WTC11 (cell line): ENCODE measurements at regions of chr19 and their contacts with region 1.

Region 1: DNA sequence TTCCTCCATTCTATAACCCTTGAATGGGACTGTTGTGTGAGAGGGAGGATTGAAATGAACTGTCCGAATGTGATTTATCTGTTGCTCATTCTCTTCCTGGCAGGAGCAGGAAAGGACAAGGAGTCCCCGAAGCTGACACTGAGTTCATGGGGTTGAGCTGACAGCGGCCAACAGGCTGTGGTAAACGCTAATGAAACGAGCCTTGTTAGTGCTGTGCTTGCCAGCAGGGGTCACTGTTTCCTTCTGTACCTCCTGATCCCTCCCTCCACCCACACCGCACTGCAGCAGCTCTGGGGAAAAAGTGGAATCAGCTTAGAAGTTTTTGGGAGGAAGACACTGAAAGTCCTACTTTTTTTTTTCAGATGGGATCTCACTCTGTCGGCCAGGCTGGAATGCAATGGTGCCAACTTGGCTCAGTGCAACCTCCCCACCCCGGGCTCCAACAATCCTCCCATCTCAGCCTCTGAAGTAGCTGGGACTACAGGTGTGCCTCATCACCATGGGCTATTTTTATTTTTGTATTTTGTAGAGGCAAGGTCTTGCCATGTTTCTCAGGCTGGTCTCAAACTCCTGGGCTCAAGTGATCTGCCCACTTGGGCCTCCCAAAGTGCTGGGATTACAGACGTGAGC is 6.7 kb upstream of the ZNF761 start:
- DNase-seq: peak; percentile 85
- ATAC-seq: peak; percentile 82
- H3K4me3 Mint-ChIP-seq: no peak overlapping the region
- H3K27ac Mint-ChIP-seq: peak overlapping the region; percentile 72
- H3K4me1 Mint-ChIP-seq: peaks cover 23% of the 10 kb centered on the region
- H3K27me3 Mint-ChIP-seq: no peaks in the 10 kb centered on the region
- CTCF ChIP-seq: peak; percentile 81

Region 2: GRCh38 chr19:53389978-53390377 is 35.1 kb before region 1 on chr19:
- CTCF ChIA-PET with region 1: interaction called, 25 read pairs
- POLR2A ChIA-PET with region 1: no interaction called
- DNase-seq: peak; percentile 96
- ATAC-seq: peak; percentile 84
- H3K4me3 Mint-ChIP-seq: peak overlapping the region; percentile 61
- H3K27ac Mint-ChIP-seq: peak overlapping the region; percentile 64
- H3K4me1 Mint-ChIP-seq: peaks cover 29% of the 10 kb centered on the region
- H3K27me3 Mint-ChIP-seq: no peaks in the 10 kb centered on the region
- CTCF ChIP-seq: no peak

Region 3: DNA sequence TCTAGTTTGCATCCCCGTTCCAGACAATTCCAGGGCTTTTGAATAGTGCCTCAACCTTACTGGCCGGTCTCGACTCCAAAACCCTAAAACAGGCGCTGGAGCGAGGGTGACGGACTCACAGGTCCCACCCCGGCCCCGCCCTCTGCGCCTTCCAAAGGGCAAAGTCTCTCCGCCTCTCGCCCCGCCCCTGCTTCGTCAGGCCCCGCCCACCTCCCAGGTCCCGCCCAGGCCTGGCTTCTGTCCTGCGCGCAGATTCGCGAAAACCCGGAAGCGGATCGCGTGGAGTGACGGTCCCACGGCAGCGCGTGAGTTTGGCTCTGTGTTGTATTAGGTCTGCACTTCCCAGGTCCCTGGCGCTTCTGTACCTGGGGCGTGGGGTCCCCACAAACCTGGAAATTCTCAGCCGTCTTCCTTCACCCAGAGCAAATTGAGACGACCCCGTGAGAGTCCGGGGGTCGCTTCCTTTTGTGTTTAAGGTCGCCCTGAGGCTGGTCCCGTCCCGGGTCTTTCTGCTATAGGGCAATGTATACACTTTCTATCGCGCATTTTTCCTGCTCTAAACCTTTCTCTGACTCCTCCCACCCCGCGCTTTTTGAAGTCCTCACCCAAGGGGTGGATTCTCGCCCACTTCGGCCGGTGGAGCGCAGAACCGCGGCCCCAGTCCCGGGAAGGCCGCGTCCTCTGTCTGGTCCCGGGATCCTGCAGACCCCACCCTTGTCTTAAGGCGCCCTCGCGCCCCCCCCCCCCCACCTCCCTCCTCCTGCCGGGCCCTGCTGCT is 42.6 kb after region 1 on chr19 and contains the start of gene ZNF813:
- CTCF ChIA-PET with region 1: interaction called, 44 read pairs
- POLR2A ChIA-PET with region 1: no interaction called
- DNase-seq: peak; percentile 99
- ATAC-seq: peak; percentile 79
- H3K4me3 Mint-ChIP-seq: peak within 1 kb of the TSS; percentile 93
- H3K27ac Mint-ChIP-seq: peak within 1 kb of the TSS; percentile 90
- H3K4me1 Mint-ChIP-seq: peaks cover 48% of the 10 kb centered on the region
- H3K27me3 Mint-ChIP-seq: peaks cover 8% of the 10 kb centered on the region
- CTCF ChIP-seq: no peak
- total RNA-seq, gene ZNF813: 15.2 to 17.6 TPM (median 17.5 TPM) in 3 replicates

Region 4: GRCh38 chr19:53492153-53492552 is 67.1 kb after region 1 on chr19:
- CTCF ChIA-PET with region 1: no interaction called
- POLR2A ChIA-PET with region 1: no interaction called
- DNase-seq: no peak
- ATAC-seq: no peak
- H3K4me3 Mint-ChIP-seq: no peak overlapping the region
- H3K27ac Mint-ChIP-seq: no peak overlapping the region
- H3K4me1 Mint-ChIP-seq: peaks cover under 1% of the 10 kb centered on the region; the same call in 1 of the 2 replicates
- H3K27me3 Mint-ChIP-seq: no peaks in the 10 kb centered on the region
- CTCF ChIP-seq: no peak

Region 5: GRCh38 chr19:53520550-53521372 is 95.7 kb after region 1 on chr19:
- CTCF ChIA-PET with region 1: interaction called, 18 read pairs
- POLR2A ChIA-PET with region 1: interaction called, 6 read pairs
- DNase-seq: peak; percentile 94
- ATAC-seq: peak; percentile 96
- H3K4me3 Mint-ChIP-seq: peak overlapping the region; percentile 100
- H3K27ac Mint-ChIP-seq: peak overlapping the region; percentile 98
- H3K4me1 Mint-ChIP-seq: peaks cover 14% of the 10 kb centered on the region
- H3K27me3 Mint-ChIP-seq: no peaks in the 10 kb centered on the region
- CTCF ChIP-seq: no peak